ENCODE measurements at regions of chr1 and their contacts with region 1.

Region 1: DNA sequence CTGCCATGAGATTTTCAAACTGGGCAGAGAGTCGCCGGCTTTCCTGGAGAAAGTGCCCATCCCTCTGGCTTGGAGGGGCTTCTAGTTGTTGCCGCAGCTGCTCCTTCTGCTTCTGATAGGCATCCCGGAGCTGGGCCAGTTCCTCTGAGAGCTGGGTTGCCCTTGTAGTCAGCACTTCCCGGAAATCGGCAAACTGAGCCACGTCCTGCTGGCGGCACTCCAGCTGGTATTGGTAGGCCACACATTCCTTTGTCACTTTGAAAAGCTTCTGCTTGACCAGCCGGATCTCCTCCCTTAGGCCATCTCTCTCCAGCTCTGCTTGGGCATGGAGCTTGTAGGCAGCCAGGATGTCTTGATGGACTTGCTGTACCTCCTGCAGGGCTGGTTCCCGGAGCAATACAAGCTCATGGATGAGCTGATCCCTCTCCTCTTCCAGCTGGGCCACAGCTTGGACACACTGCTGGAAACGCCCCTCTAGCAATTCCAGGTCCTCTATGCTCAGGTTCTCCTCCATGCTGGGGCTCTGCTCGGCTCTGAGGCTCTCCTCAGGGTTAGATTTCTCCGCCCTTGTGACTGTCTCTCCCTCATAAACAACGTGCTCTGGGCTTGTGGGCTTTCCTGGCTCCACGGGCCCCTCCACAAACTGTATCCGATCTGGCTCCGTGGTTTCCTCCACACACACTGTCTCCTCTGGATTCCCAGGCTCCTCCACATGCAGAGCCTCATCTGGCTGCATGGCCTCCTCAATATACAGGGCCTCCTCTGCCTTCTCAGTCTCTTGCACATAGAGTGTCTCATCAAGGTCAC is 7.3 kb downstream of the SYNC start:
- DNase-seq: no peak
- H3K4me3 ChIP-seq: no peak overlapping the region
- H3K27ac ChIP-seq: no peak overlapping the region
- H3K4me1 ChIP-seq: no peaks in the 10 kb centered on the region
- H3K27me3 ChIP-seq: no peaks in the 10 kb centered on the region
- CTCF ChIP-seq: no peak
- EP300 ChIP-seq: no peak
- POLR2A ChIP-seq: no peak
- RAD21 ChIP-seq: no peak

Region 2: DNA sequence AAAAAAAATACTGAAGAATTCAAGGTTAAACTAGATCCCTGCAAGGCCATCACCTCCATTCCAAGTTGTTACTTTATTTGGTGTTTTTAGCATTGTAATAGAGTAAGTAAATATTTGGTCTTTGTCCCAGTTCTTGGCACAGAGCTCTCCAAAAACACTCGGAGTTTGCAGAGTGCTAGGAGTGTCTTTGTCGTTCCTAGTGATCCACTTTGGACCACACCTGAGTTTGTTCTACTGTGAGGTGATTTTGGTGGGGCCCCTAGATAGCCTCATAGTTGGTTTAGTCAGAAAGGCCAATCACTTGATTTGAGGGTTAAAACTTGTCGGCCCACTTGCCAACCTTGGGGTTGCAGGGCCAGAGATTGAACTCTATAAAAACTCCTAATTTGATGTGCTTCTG is 18.4 kb before region 1 on chr1:
- CTCF ChIA-PET with region 1: no interaction called
- POLR2A ChIA-PET with region 1: interaction called, 124 read pairs
- DNase-seq: no peak
- H3K4me3 ChIP-seq: no peak overlapping the region
- H3K27ac ChIP-seq: no peak overlapping the region
- H3K4me1 ChIP-seq: no peaks in the 10 kb centered on the region
- H3K27me3 ChIP-seq: no peaks in the 10 kb centered on the region
- CTCF ChIP-seq: no peak
- EP300 ChIP-seq: no peak
- POLR2A ChIP-seq: no peak
- RAD21 ChIP-seq: no peak

Region 3: GRCh38 chr1:32684167-32684811 is 11.0 kb before region 1 on chr1:
- CTCF ChIA-PET with region 1: interaction called, 4 read pairs
- POLR2A ChIA-PET with region 1: interaction called, 124 read pairs
- DNase-seq: no peak
- H3K4me3 ChIP-seq: no peak overlapping the region
- H3K27ac ChIP-seq: no peak overlapping the region
- H3K4me1 ChIP-seq: no peaks in the 10 kb centered on the region
- H3K27me3 ChIP-seq: no peaks in the 10 kb centered on the region
- CTCF ChIP-seq: no peak
- EP300 ChIP-seq: no peak
- POLR2A ChIP-seq: no peak
- RAD21 ChIP-seq: no peak

Region 4: DNA sequence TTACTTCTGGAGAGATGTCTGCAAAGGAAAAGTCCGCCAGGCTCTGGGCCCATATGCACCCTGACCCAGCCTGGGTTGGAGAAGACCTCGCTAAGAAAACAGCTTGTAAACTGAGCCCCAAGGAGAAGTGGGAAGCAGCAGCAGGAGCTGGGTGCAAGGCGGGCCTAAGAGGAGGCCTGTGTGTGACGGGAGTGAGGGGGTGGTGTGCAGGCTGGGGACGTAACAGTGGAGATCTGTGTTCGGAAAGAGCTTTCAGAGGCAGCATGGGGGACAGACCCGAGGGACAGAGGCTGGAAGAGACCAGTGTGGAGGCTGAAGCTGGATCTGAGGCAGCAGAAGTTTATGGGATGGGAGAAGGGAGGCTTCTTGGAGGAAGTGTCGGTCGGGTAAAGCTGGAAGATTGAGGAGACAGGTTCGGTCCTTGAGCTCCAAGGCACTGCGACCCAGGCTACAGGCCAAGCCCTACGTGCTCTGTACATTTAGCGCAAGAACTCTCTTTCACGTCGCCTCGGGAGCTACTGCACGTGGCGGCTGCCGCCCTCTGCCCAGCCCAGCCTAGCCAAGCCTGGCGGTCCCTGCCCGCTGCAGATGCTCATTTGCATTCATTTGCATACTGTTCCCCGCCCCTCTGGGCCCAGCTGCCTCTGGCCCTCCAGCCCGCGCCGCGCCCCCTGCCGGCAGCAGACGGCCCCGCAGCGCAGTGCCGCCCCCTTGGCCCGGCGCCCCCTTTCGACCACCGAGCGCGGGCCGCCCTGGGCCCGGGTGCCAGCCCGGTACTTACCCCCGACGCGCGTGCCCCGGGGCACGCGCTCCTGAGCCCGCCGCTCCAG is 197.3 kb after region 1 on chr1:
- CTCF ChIA-PET with region 1: no interaction called
- POLR2A ChIA-PET with region 1: no interaction called
- DNase-seq: peak; percentile 47 to 93
- H3K4me3 ChIP-seq: peak overlapping the region; percentile 48 to 87 (median 66)
- H3K27ac ChIP-seq: no peak overlapping the region
- H3K4me1 ChIP-seq: peaks cover 0 to 15% (median 7%) of the 10 kb centered on the region in 4 experiments; a peak in 5 of 7 replicates
- H3K27me3 ChIP-seq: peaks cover 2 to 33% (median 17%) of the 10 kb centered on the region in 4 experiments
- CTCF ChIP-seq: peak in 2 of 3 experiments; percentile 95 to 99; a peak in 3 of 4 replicates
- EP300 ChIP-seq: no peak
- POLR2A ChIP-seq: no peak; a peak in 1 of 3 replicates
- RAD21 ChIP-seq: peak; percentile 34 to 57; a peak in 3 of 4 replicates

Measured in H1 (cell line).